AG04450 (cell line): ENCODE measurements at regions of chr1 and their contacts with region 1.

Region 1: DNA sequence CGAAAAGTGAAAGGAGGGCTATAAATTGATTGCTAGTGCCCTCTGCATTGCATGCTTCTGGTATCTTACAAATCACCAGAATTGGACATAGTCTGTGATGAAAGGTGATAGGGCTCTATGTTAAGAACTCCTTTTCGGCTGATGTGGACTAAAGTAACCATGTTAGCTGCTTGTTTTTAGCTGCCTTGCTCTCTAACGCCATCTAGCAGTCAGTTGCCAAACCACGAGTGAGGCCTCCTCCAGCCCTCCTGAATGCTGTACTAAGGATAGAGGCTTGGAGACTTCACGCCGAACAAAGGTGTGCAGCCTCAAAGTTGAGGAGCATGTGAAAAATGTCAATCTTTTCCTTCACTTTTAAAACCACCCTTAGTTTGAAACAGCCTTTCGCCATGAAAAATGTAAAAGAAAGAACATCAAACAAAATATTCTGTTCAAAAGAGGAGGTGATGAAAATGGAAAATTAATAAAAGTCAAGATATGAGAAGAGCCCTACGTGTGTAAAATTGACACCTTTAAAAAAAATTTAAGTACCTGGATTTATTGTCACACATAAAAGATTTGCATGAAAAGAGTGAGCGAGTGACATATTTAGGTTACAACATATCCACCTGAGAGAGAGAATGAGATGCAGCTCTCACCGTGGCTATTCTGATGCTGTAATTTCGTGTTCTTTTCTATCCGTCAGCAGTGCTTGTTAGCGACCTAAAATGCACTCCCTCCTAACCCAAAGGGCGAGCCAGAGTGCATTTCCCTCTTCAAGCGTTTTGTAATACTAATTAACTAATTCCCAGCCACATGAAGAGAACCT is 8.1 kb downstream of the LRRC53 start:
- DNase-seq: peak; percentile 13
- H3K4me3 ChIP-seq: no peak overlapping the region
- H3K27ac ChIP-seq: no peak overlapping the region
- H3K27me3 ChIP-seq: no peaks in the 10 kb centered on the region
- CTCF ChIP-seq: peak; percentile 99

Region 2: GRCh38 chr1:73839922-73840321 is 664.4 kb before region 1 on chr1:
- CTCF ChIA-PET with region 1: interaction called, 13 read pairs
- POLR2A ChIA-PET with region 1: no interaction called
- DNase-seq: no peak
- H3K4me3 ChIP-seq: no peak overlapping the region
- H3K27ac ChIP-seq: no peak overlapping the region
- H3K27me3 ChIP-seq: no peaks in the 10 kb centered on the region
- CTCF ChIP-seq: peak; percentile 45

Region 3: DNA sequence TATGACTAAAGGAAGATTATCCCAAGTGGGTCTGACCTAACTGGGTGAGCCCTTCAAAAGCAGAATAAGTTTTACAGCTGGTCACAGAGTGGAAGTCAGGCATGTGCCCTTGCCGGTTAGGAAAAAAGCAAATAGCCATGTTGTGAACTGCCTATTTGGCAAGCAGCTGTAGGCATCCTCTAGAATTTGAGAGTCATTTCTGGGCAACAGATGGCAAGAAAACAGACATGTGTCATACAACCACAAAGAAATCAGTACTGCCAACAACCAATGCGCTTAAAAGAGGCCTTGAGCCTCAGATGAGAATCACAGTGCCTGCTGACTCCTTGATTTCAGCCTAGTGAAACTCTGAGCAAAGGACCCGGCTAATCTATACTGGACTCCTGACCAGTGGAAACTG is 18.7 kb before region 1 on chr1:
- CTCF ChIA-PET with region 1: interaction called, 10 read pairs
- POLR2A ChIA-PET with region 1: no interaction called
- DNase-seq: no peak
- H3K4me3 ChIP-seq: no peak overlapping the region
- H3K27ac ChIP-seq: no peak overlapping the region
- H3K27me3 ChIP-seq: no peaks in the 10 kb centered on the region
- CTCF ChIP-seq: no peak